Mammary epithelial cell (primary cell): ENCODE measurements at regions of chr17 and their contacts with region 1.

Region 1: GRCh38 chr17:14069251-14070021 is at the start of gene COX10:
- DNase-seq: peak; percentile 85
- H3K4me3 ChIP-seq: peak within 1 kb of the TSS; percentile 92 to 97 (median 97)
- H3K27ac ChIP-seq: peak within 1 kb of the TSS; percentile 86
- H3K4me1 ChIP-seq: peaks cover 6% of the 10 kb centered on the region
- H3K27me3 ChIP-seq: no peaks in the 10 kb centered on the region
- CTCF ChIP-seq: no peak
- total RNA-seq, gene COX10: 18.2 to 18.4 TPM

Region 2: GRCh38 chr17:13725288-13725990 is 344.0 kb before region 1 on chr17:
- CTCF ChIA-PET with region 1: no interaction called
- dilution Hi-C with region 1: no loop called
- in situ Hi-C with region 1: no loop called
- intact Hi-C with region 1: no loop called
- DNase-seq: no peak
- H3K4me3 ChIP-seq: no peak overlapping the region
- H3K27ac ChIP-seq: no peak overlapping the region
- H3K4me1 ChIP-seq: no peaks in the 10 kb centered on the region
- H3K27me3 ChIP-seq: no peaks in the 10 kb centered on the region
- CTCF ChIP-seq: no peak

Region 3: DNA sequence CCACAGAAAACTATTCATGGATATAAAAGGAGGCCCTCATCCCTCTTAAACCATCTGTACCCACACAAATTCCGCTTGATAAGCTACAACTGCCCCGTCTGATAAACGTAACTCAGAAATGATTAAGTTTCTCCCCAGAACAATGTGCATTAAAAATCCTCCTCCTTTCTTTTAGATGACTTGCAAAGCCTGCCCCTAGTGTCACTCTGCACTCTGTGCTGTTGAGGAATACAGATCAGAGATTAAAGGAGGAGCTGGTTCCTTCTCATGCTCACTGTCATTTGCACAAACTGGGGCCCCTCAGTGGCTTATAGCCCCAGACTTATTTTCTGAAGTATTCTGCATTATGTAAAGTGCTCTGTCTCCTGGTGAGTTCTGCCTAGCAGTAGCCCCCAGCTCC is 134.0 kb after region 1 on chr17:
- CTCF ChIA-PET with region 1: no interaction called
- dilution Hi-C with region 1: no loop called
- in situ Hi-C with region 1: no loop called
- intact Hi-C with region 1: loop called (anchors 5 kb)
- DNase-seq: no peak
- H3K4me3 ChIP-seq: no peak overlapping the region
- H3K27ac ChIP-seq: no peak overlapping the region
- H3K4me1 ChIP-seq: peaks cover 16% of the 10 kb centered on the region
- H3K27me3 ChIP-seq: no peaks in the 10 kb centered on the region
- CTCF ChIP-seq: peak; percentile 40 to 51